Caco-2 (cell line): ENCODE measurements at regions of chr1 and their contacts with region 1.

Region 1: GRCh38 chr1:42165511-42166163 is 1.1 kb upstream of the GUCA2A start:
- DNase-seq: peak; percentile 86 to 90
- H3K4me3 ChIP-seq: no peak overlapping the region
- H3K4me3 Mint-ChIP-seq: peak overlapping the region; percentile 60
- H3K27ac Mint-ChIP-seq: peak overlapping the region; percentile 51
- H3K4me1 ChIP-seq: peaks cover 34% of the 10 kb centered on the region
- H3K4me1 Mint-ChIP-seq: peaks cover 30% of the 10 kb centered on the region
- H3K27me3 ChIP-seq: no peaks in the 10 kb centered on the region
- H3K27me3 Mint-ChIP-seq: no peaks in the 10 kb centered on the region
- CTCF ChIP-seq: no peak

Region 2: DNA sequence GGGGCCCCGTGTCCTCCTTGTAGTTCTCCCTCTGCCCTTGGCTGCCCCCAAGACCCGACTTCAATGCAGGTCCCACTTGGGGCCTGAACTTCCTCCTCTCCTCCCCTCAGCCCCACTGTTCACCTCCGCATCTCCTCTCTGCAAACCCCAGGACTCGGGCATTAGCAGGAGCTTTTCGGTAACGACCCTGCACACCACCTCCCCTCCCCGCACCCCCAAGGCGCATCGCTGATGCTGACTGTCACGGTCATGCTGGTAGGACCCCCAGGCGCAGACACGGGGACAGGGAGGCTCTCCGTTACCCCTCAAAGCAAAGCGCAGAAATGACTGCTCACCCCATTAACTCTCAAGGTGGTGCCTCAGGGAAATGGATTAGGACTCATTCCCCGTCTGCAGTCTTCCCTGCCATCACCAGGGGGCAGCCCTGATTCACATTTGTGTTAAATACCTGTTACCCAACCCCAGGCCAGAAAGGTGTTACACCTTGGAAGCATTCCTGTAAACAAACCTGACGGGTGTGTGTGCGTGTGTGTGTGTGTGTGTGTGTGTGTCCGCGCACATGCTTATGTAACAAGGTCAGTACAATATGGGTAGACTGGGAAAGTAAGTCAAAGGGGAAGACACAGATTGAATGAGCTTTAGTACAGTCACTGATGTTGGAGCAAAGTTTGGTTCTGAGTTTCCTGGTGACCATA is 18.9 kb before region 1 on chr1:
- CTCF ChIA-PET with region 1: no interaction called
- POLR2A ChIA-PET with region 1: no interaction called
- intact Hi-C with region 1: loop called (anchors 2 kb)
- DNase-seq: peak; percentile 89
- H3K4me3 ChIP-seq: no peak overlapping the region
- H3K4me3 Mint-ChIP-seq: no peak overlapping the region
- H3K27ac Mint-ChIP-seq: no peak overlapping the region
- H3K4me1 ChIP-seq: peaks cover 7% of the 10 kb centered on the region
- H3K4me1 Mint-ChIP-seq: no peaks in the 10 kb centered on the region
- H3K27me3 ChIP-seq: no peaks in the 10 kb centered on the region
- H3K27me3 Mint-ChIP-seq: peaks cover 7% of the 10 kb centered on the region
- CTCF ChIP-seq: peak; percentile 75 to 89

Region 3: DNA sequence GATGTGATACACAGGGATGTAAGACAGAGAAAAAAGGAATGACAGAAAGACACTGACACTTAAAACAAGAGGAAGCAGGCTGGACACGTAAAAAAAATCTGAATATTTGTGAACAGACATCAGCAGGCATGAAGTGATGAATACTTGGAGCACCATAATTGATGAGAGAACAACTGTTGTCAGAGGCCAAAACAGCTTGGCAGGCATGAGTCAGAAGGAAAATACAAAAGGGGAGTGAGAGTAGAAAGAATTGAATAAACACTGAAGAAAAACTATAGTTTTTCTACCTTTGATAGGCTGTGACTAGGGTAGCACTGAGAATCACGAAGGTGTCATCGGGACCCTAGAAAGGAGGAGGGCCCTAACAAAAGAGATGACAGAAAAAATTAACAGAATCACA is 20.5 kb after region 1 on chr1:
- CTCF ChIA-PET with region 1: no interaction called
- POLR2A ChIA-PET with region 1: no interaction called
- intact Hi-C with region 1: no loop called
- DNase-seq: no peak
- H3K4me3 ChIP-seq: no peak overlapping the region
- H3K4me3 Mint-ChIP-seq: no peak overlapping the region
- H3K27ac Mint-ChIP-seq: no peak overlapping the region
- H3K4me1 ChIP-seq: 0 out of 2 replicates have a peak, but pooled peaks cover 9% of the 10 kb centered on the region
- H3K4me1 Mint-ChIP-seq: peaks cover 15% of the 10 kb centered on the region
- H3K27me3 ChIP-seq: no peaks in the 10 kb centered on the region
- H3K27me3 Mint-ChIP-seq: no peaks in the 10 kb centered on the region
- CTCF ChIP-seq: no peak